Activated CD4-positive, alpha-beta T cell treated with anti-CD3 and anti-CD28 coated beads, Interleukin-2, amount 10 ng/mL, durations not matched to agents 7 days and 5 days (primary cell): ENCODE measurements at regions of chr10 and their contacts with region 1.

Region 1: GRCh38 chr10:103547391-103547946 is 54.0 kb downstream of the NEURL1 start:
- DNase-seq: no peak
- H3K4me3 Mint-ChIP-seq: no peak overlapping the region
- H3K27ac Mint-ChIP-seq: no peak overlapping the region
- H3K4me1 Mint-ChIP-seq: peaks cover 11% of the 10 kb centered on the region
- H3K27me3 Mint-ChIP-seq: peaks cover 10% of the 10 kb centered on the region

Region 2: GRCh38 chr10:103382769-103383168 is 164.7 kb before region 1 on chr10:
- CTCF ChIA-PET with region 1: no interaction called
- POLR2A ChIA-PET with region 1: no interaction called
- DNase-seq: no peak
- H3K4me3 Mint-ChIP-seq: no peak overlapping the region
- H3K27ac Mint-ChIP-seq: no peak overlapping the region
- H3K4me1 Mint-ChIP-seq: no peaks in the 10 kb centered on the region
- H3K27me3 Mint-ChIP-seq: no peaks in the 10 kb centered on the region

Region 3: GRCh38 chr10:103534581-103535508 is 12.6 kb before region 1 on chr10:
- CTCF ChIA-PET with region 1: interaction called, 11 read pairs
- POLR2A ChIA-PET with region 1: no interaction called
- DNase-seq: no peak
- H3K4me3 Mint-ChIP-seq: no peak overlapping the region
- H3K27ac Mint-ChIP-seq: no peak overlapping the region
- H3K4me1 Mint-ChIP-seq: no peaks in the 10 kb centered on the region
- H3K27me3 Mint-ChIP-seq: peaks cover 26% of the 10 kb centered on the region

Region 4: DNA sequence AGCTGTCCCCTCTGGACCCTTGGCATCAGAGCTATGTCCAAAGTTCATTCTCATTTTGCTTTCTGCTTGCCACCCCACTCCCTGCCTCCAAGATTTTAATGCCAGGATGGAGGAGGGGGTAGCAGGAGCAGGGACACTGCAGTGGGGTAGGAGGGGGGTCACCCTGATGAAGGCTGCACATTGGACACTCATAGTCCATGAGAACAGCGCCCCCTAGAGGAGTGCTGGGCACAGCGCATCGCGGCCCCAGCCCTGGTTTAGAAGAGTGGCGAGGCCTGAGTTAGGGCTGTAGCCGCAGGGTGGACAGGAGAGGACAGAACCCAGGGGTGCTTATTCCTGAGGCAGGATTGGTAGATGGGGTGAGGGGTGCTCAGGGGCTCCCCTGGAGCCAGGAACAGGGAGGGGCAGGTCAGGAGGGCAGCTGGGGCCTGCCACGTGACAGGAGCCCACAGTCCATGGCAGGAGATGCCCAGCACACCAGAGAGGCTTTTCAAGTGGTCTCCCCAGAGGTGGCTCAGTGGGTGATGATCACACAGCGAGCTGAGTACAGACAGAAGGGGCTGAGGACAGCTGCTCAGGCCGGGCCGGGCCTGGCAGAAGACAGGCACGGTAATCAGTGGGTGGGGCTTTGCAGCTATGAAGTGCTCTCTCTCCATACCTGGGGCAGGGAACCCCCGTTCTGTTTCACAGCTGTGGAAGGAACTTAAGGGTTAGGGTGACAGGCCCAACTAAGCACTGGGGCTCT is 17.5 kb after region 1 on chr10:
- CTCF ChIA-PET with region 1: interaction called, 10 read pairs
- POLR2A ChIA-PET with region 1: no interaction called
- DNase-seq: peak; percentile 45
- H3K4me3 Mint-ChIP-seq: no peak overlapping the region
- H3K27ac Mint-ChIP-seq: no peak overlapping the region
- H3K4me1 Mint-ChIP-seq: no peaks in the 10 kb centered on the region
- H3K27me3 Mint-ChIP-seq: no peaks in the 10 kb centered on the region